Left lung (tissue), 14 donors: ENCODE measurements at regions of chr9 and their contacts with region 1.

Region 1: GRCh38 chr9:32571969-32572899 is 725 bp downstream of the NDUFB6 start:
- DNase-seq: peak in 2 of 4 donors; percentile 52 to 71
- ATAC-seq: peak; percentile 96
- H3K4me3 ChIP-seq: peak overlapping the region; percentile 74 to 81
- H3K27ac ChIP-seq: peak overlapping the region; percentile 82 to 85
- H3K4me1 ChIP-seq: peaks cover 19 to 34% of the 10 kb centered on the region in 2 donors
- H3K27me3 ChIP-seq: no peaks in the 10 kb centered on the region
- CTCF ChIP-seq: peak; percentile 42 to 69

Region 2: GRCh38 chr9:32264170-32264862 is 307.9 kb before region 1 on chr9:
- intact Hi-C with region 1: no loop called
- DNase-seq: no peak
- ATAC-seq: peak; percentile 33
- H3K4me3 ChIP-seq: no peak overlapping the region
- H3K27ac ChIP-seq: no peak overlapping the region
- H3K4me1 ChIP-seq: no peaks in the 10 kb centered on the region
- H3K27me3 ChIP-seq: no peaks in the 10 kb centered on the region
- CTCF ChIP-seq: no peak

Region 3: GRCh38 chr9:32350682-32351081 is 221.6 kb before region 1 on chr9:
- intact Hi-C with region 1: no loop called
- DNase-seq: peak in 1 of 4 donors; percentile 11
- ATAC-seq: no peak
- H3K4me3 ChIP-seq: no peak overlapping the region
- H3K27ac ChIP-seq: no peak overlapping the region
- H3K4me1 ChIP-seq: no peaks in the 10 kb centered on the region
- H3K27me3 ChIP-seq: no peaks in the 10 kb centered on the region
- CTCF ChIP-seq: no peak

Region 4: GRCh38 chr9:32384364-32385151 is 187.7 kb before region 1 on chr9 and contains the start of gene ACO1:
- intact Hi-C with region 1: loop called in 1 of 2 experiments (anchors 10 kb)
- DNase-seq: peak; percentile 87 to 98 (median 93)
- ATAC-seq: peak; percentile 99
- H3K4me3 ChIP-seq: peak within 1 kb of the TSS; percentile 74 to 81
- H3K27ac ChIP-seq: peak within 1 kb of the TSS; percentile 70 to 88
- H3K4me1 ChIP-seq: peaks cover 5 to 17% of the 10 kb centered on the region in 2 donors
- H3K27me3 ChIP-seq: peaks cover 0 to 22% of the 10 kb centered on the region in 2 donors
- CTCF ChIP-seq: no peak
- polyA plus RNA-seq, gene ACO1: 28.6 to 35.4 (median 31.5) TPM

Region 5: GRCh38 chr9:32431940-32432555 is 140.2 kb before region 1 on chr9:
- intact Hi-C with region 1: loop called in 1 of 2 experiments (anchors 10 kb)
- DNase-seq: peak in 2 of 4 donors; percentile 13 to 32
- ATAC-seq: peak; percentile 61
- H3K4me3 ChIP-seq: no peak overlapping the region
- H3K27ac ChIP-seq: no peak overlapping the region
- H3K4me1 ChIP-seq: no peaks in the 10 kb centered on the region
- H3K27me3 ChIP-seq: no peaks in the 10 kb centered on the region
- CTCF ChIP-seq: peak; percentile 35 to 43